Activated CD4-positive, alpha-beta T cell treated with anti-CD3 and anti-CD28 coated beads for 36 hours (primary cell): ENCODE measurements at regions of chr16 and their contacts with region 1.

Region 1: GRCh38 chr16:21554795-21555585 is 44.4 kb upstream of the METTL9 start:
- DNase-seq: peak; percentile 98
- ATAC-seq: peak; percentile 94
- H3K4me3 Mint-ChIP-seq: peak overlapping the region; percentile 30
- H3K27ac Mint-ChIP-seq: peak overlapping the region; percentile 72
- H3K4me1 Mint-ChIP-seq: peaks cover 11% of the 10 kb centered on the region
- H3K27me3 Mint-ChIP-seq: peaks cover 5% of the 10 kb centered on the region

Region 2: GRCh38 chr16:21158208-21159110 is 396.5 kb before region 1 on chr16 and contains the start of gene LDAF1:
- CTCF ChIA-PET with region 1: no interaction called
- POLR2A ChIA-PET with region 1: no interaction called
- intact Hi-C with region 1: loop called in 1 of 2 experiments (anchors 1 kb)
- DNase-seq: peak; percentile 90
- ATAC-seq: peak; percentile 99
- H3K4me3 Mint-ChIP-seq: peak within 1 kb of the TSS; percentile 88
- H3K27ac Mint-ChIP-seq: peak within 1 kb of the TSS; percentile 81
- H3K4me1 Mint-ChIP-seq: peaks cover 20% of the 10 kb centered on the region
- H3K27me3 Mint-ChIP-seq: no peaks in the 10 kb centered on the region
- total RNA-seq, gene LDAF1: 7.2 to 11.7 TPM

Region 3: GRCh38 chr16:21184834-21185233 is 370.2 kb before region 1 on chr16:
- CTCF ChIA-PET with region 1: no interaction called
- POLR2A ChIA-PET with region 1: no interaction called
- intact Hi-C with region 1: loop called (anchors 1 to 5 kb)
- DNase-seq: peak; percentile 50
- ATAC-seq: peak; percentile 81
- H3K4me3 Mint-ChIP-seq: no peak overlapping the region
- H3K27ac Mint-ChIP-seq: peak overlapping the region; percentile 44
- H3K4me1 Mint-ChIP-seq: peaks cover 28% of the 10 kb centered on the region
- H3K27me3 Mint-ChIP-seq: peaks cover 3% of the 10 kb centered on the region

Region 4: GRCh38 chr16:21300309-21301167 is 254.5 kb before region 1 on chr16:
- CTCF ChIA-PET with region 1: no interaction called
- POLR2A ChIA-PET with region 1: no interaction called
- intact Hi-C with region 1: loop called in 1 of 2 experiments (anchors 2 kb)
- DNase-seq: peak; percentile 81
- ATAC-seq: peak; percentile 77
- H3K4me3 Mint-ChIP-seq: peak overlapping the region; percentile 85
- H3K27ac Mint-ChIP-seq: peak overlapping the region; percentile 81
- H3K4me1 Mint-ChIP-seq: peaks cover 25% of the 10 kb centered on the region
- H3K27me3 Mint-ChIP-seq: peaks cover 22% of the 10 kb centered on the region

Region 5: DNA sequence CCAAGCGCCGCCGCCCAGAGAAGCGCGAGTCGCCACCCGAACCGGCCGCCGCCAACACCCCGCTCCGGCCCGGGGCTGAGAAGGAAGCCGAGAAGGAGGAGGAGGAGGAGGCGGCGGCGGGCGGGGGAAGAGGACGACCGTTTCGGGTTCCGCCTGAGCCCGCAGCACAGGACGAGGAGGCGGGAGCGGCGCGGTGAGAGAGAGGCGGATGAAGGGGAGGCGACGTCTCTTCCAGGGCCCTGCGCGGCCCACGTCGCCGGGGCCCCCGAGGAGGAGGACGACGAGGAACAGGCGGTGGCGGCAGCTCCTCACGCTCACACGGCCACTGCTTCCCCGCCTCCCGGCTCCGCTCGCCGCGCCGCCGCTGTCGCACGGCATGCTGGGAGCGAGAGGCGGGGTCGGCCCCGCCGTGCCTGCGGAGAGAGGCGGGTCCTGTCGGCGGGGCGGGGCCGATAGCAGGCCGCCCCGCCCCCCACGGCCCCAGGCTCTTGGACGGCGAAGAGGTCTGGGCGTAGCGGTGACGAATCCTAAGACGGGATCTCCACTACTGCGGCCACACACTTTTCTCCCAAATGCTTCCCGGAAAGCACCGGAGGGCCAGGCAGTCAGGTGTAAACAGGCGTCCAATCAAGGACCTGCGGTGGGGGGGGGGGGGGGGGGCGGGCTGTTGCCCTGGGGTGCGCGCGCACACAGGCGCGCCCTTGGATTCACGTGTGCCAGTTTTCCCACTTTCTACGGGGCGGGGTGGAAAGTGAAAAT is 52.9 kb before region 1 on chr16:
- CTCF ChIA-PET with region 1: no interaction called
- POLR2A ChIA-PET with region 1: no interaction called
- intact Hi-C with region 1: loop called (anchors 5 to 10 kb)
- DNase-seq: peak; percentile 97
- ATAC-seq: peak; percentile 75
- H3K4me3 Mint-ChIP-seq: peak overlapping the region; percentile 83
- H3K27ac Mint-ChIP-seq: peak overlapping the region; percentile 93
- H3K4me1 Mint-ChIP-seq: peaks cover 24% of the 10 kb centered on the region
- H3K27me3 Mint-ChIP-seq: no peaks in the 10 kb centered on the region

Region 6: GRCh38 chr16:22232277-22233042 is 677.5 kb after region 1 on chr16:
- CTCF ChIA-PET with region 1: no interaction called
- POLR2A ChIA-PET with region 1: no interaction called
- intact Hi-C with region 1: no loop called
- DNase-seq: peak; percentile 68
- ATAC-seq: peak; percentile 100
- H3K4me3 Mint-ChIP-seq: no peak overlapping the region
- H3K27ac Mint-ChIP-seq: peak overlapping the region; percentile 51
- H3K4me1 Mint-ChIP-seq: peaks cover 11% of the 10 kb centered on the region
- H3K27me3 Mint-ChIP-seq: no peaks in the 10 kb centered on the region

Region 7: GRCh38 chr16:22948603-22949368 is 1393.8 kb after region 1 on chr16:
- CTCF ChIA-PET with region 1: no interaction called
- POLR2A ChIA-PET with region 1: no interaction called
- intact Hi-C with region 1: loop called in 1 of 2 experiments (anchors 2 kb)
- DNase-seq: peak; percentile 84
- ATAC-seq: peak; percentile 92
- H3K4me3 Mint-ChIP-seq: no peak overlapping the region
- H3K27ac Mint-ChIP-seq: no peak overlapping the region
- H3K4me1 Mint-ChIP-seq: peaks cover 6% of the 10 kb centered on the region
- H3K27me3 Mint-ChIP-seq: peaks cover 45% of the 10 kb centered on the region

Region 8: GRCh38 chr16:23060458-23061320 is 1505.7 kb after region 1 on chr16:
- CTCF ChIA-PET with region 1: no interaction called
- POLR2A ChIA-PET with region 1: no interaction called
- intact Hi-C with region 1: loop called in 1 of 2 experiments (anchors 1 kb)
- DNase-seq: peak; percentile 75
- ATAC-seq: peak; percentile 73
- H3K4me3 Mint-ChIP-seq: no peak overlapping the region
- H3K27ac Mint-ChIP-seq: no peak overlapping the region
- H3K4me1 Mint-ChIP-seq: peaks cover 4% of the 10 kb centered on the region
- H3K27me3 Mint-ChIP-seq: peaks cover 20% of the 10 kb centered on the region